Heart right ventricle (tissue), 16 donors: ENCODE measurements at regions of chr6 and their contacts with region 1.

Region 1: GRCh38 chr6:27472617-27473400 is at the start of gene ZNF184:
- DNase-seq: peak; percentile 95 to 96
- ATAC-seq: peak; percentile 99 to 100 (median 100)
- H3K4me3 ChIP-seq: peak within 1 kb of the TSS; percentile 51 to 97 (median 80)
- H3K27ac ChIP-seq: peak within 1 kb of the TSS in 9 of 10 donors; percentile 81 to 93 (median 90)
- H3K4me1 ChIP-seq: peaks cover under 1 to 31% (median 17%) of the 10 kb centered on the region in 9 donors
- H3K27me3 ChIP-seq: no peaks in the 10 kb centered on the region
- CTCF ChIP-seq: peak in 3 of 9 donors; percentile 7 to 30 (median 17)
- total RNA-seq, gene ZNF184: 2.1 to 5.5 (median 3.4) TPM

Region 2: DNA sequence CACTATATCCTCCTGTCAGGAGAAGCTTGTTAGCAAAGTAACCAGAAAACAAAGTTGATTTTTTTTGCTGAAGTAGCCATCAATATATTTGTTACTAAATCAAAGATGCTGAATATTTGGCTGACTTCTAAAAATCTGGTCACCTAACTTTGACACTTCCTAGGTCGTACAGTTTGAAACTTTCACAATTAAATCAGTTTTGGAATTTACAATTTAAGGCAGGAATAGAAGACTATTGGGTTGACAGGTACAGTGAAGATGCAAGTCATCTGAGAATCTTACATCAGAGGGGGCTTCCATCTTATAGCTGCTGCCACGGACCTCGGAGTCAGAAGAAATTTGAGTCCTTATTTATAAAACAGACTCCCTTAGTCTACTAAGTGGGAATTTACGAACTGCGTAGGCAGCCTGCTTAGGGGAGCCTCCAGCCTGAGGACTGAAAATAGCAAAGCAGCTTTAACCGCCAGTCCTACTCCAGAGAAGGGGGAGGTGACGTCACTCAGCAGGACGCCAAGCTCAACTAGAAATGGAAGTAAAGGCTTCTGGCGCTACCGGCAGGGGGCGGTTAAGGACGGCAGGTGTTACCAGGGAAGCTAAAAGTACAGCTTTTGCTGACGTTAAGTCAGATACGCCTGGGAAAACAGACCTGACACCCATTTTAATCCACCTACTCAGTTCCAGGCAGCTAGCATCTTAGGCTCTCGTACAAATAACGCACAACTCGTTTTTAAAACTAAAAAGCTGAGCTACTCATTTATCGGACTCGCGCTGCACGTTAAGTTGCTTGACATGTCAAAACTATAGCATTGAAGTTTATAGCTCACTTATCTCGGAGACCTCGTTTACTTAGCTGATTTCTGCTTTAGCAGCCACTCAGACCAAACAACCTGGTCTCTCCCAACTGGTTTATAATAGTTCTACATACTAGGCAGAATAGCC is 1446.6 kb before region 1 on chr6:
- intact Hi-C with region 1: loop called in 2 of 10 experiments (anchors 10 kb)
- DNase-seq: peak; percentile 90 to 96
- ATAC-seq: peak; percentile 65 to 83 (median 74)
- H3K4me3 ChIP-seq: peak overlapping the region; percentile 51 to 79 (median 68)
- H3K27ac ChIP-seq: peak overlapping the region; percentile 86 to 96 (median 91)
- H3K4me1 ChIP-seq: peaks cover 0 to 52% (median 10%) of the 10 kb centered on the region in 9 donors
- H3K27me3 ChIP-seq: no peaks in the 10 kb centered on the region
- CTCF ChIP-seq: peak; percentile 48 to 93 (median 83)

Region 3: GRCh38 chr6:26553635-26554446 is 919.0 kb before region 1 on chr6:
- intact Hi-C with region 1: loop called in 1 of 10 experiments (anchors 10 kb)
- DNase-seq: peak; percentile 77 to 78
- ATAC-seq: peak; percentile 71 to 93 (median 85)
- H3K4me3 ChIP-seq: peak overlapping the region; percentile 30 to 64 (median 58)
- H3K27ac ChIP-seq: peak overlapping the region in 9 of 10 donors; percentile 66 to 87 (median 77)
- H3K4me1 ChIP-seq: peaks cover 0 to 47% (median 15%) of the 10 kb centered on the region in 9 donors
- H3K27me3 ChIP-seq: no peaks in the 10 kb centered on the region
- CTCF ChIP-seq: no peak

Region 4: DNA sequence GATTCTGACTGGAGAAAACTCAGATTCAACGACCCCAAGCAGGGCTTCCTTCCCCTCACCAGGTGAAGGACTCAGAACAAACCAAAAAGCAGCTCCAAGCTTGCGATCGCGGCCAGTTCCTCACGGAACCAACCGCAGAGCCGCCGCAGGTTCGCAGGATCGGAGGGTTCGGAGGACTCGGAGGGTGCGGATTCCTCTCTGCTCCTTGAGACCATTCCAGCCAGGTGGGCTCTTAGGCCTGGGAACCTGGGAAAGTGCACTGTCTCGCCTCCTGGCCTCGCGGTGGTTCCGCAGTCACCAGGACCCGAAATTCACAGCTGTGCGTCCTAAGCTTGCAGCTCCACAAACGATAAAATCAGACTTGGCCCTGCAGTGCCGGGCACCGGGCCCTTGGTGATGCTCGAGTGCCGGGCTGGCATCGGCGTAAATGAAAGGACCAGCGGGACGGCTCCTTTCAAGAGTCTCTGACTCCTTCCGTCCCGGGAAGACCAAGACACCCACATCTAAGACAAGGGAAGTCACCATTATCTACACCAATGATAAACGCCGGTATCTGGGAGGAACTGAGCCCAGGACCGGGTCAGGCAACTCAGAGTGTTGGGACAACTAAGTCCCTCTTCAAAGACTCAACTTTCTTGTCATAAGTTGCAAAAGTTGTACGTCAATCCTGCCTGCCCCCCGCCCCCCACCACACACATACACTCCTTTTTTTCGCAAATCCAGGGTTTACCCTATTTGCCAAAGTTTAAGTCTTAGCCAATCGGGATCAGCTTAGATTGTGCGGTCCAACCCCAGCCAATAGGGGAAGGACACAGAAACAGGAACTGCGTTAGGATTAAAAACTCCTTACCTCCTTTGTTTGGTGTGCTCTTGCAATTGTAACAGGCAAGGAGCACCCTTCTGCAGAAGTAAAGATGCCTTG is 295.1 kb before region 1 on chr6:
- intact Hi-C with region 1: loop called in 5 of 10 experiments (anchors 2 to 10 kb)
- DNase-seq: peak; percentile 62 to 65
- ATAC-seq: peak; percentile 73 to 94 (median 86)
- H3K4me3 ChIP-seq: peak overlapping the region; percentile 73 to 100 (median 87)
- H3K27ac ChIP-seq: peak overlapping the region in 9 of 10 donors; percentile 23 to 84 (median 61)
- H3K4me1 ChIP-seq: peaks cover 0 to 20% (median 7%) of the 10 kb centered on the region in 9 donors
- H3K27me3 ChIP-seq: peaks cover 0 to 16% (median 8%) of the 10 kb centered on the region in 7 donors
- CTCF ChIP-seq: peak in 7 of 9 donors; percentile 19 to 62 (median 48)

Region 5: GRCh38 chr6:27388293-27389197 is 84.3 kb before region 1 on chr6 and contains the start of gene ZNF391:
- intact Hi-C with region 1: loop called in 3 of 10 experiments (anchors 2 to 5 kb)
- DNase-seq: peak; percentile 54 to 64
- ATAC-seq: peak; percentile 92 to 97 (median 96)
- H3K4me3 ChIP-seq: peak within 1 kb of the TSS; percentile 39 to 82 (median 62)
- H3K27ac ChIP-seq: peak within 1 kb of the TSS; percentile 5 to 86 (median 64)
- H3K4me1 ChIP-seq: peaks cover 0 to 15% (median 8%) of the 10 kb centered on the region in 9 donors
- H3K27me3 ChIP-seq: peaks cover 0 to 14% (median 0%) of the 10 kb centered on the region in 7 donors
- CTCF ChIP-seq: no peak
- total RNA-seq, gene ZNF391: 0.79 to 1.8 (median 1.3) TPM

Region 6: GRCh38 chr6:28981833-28982475 is 1509.1 kb after region 1 on chr6:
- intact Hi-C with region 1: loop called in 1 of 10 experiments (anchors 10 kb)
- DNase-seq: peak; percentile 72 to 86
- ATAC-seq: peak; percentile 72 to 90 (median 86)
- H3K4me3 ChIP-seq: peak overlapping the region; percentile 42 to 71 (median 66)
- H3K27ac ChIP-seq: peak overlapping the region; percentile 21 to 76 (median 68)
- H3K4me1 ChIP-seq: peaks cover 0 to 47% (median 6%) of the 10 kb centered on the region in 9 donors
- H3K27me3 ChIP-seq: peaks cover 0 to 18% (median 14%) of the 10 kb centered on the region in 7 donors
- CTCF ChIP-seq: peak in 5 of 9 donors; percentile 15 to 40 (median 23)